ENCODE measurements at regions of chr4 and their contacts with region 1.

Region 1: GRCh38 chr4:176013476-176014247 is 52.0 kb upstream of the WDR17 start:
- DNase-seq: peak; percentile 79
- H3K4me3 ChIP-seq: peak overlapping the region; percentile 26
- H3K27ac ChIP-seq: peak overlapping the region; percentile 85
- H3K4me1 ChIP-seq: peaks cover 52% of the 10 kb centered on the region
- CTCF ChIP-seq: no peak

Region 2: DNA sequence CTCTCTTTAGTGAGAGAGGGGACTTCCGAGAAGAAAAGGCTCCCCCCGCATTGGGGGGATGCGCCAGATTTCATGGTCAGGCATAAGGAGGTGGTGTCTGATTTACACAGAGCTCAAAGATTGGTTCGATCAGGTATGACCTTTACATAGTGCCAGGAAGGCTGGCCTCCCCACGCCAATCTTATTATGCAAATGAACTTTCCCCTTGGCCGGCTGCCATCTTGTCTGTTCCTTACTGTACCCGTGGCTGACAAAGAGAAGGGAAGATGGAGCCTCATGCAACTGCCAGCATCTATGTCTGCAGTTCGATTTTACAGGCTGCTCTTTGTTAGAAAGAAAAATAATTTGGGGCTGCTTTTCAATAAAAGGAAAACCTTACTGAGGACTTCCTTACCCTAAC is 398.8 kb before region 1 on chr4:
- CTCF ChIA-PET with region 1: no interaction called
- POLR2A ChIA-PET with region 1: no interaction called
- intact Hi-C with region 1: no loop called
- DNase-seq: no peak
- H3K4me3 ChIP-seq: no peak overlapping the region
- H3K27ac ChIP-seq: no peak overlapping the region
- H3K4me1 ChIP-seq: no peaks in the 10 kb centered on the region
- CTCF ChIP-seq: no peak

Region 3: GRCh38 chr4:175997291-175997690 is 16.4 kb before region 1 on chr4:
- CTCF ChIA-PET with region 1: no interaction called
- POLR2A ChIA-PET with region 1: interaction called, 10 read pairs
- intact Hi-C with region 1: no loop called
- DNase-seq: no peak
- H3K4me3 ChIP-seq: no peak overlapping the region
- H3K27ac ChIP-seq: no peak overlapping the region
- H3K4me1 ChIP-seq: peaks cover 11% of the 10 kb centered on the region
- CTCF ChIP-seq: no peak

Region 4: DNA sequence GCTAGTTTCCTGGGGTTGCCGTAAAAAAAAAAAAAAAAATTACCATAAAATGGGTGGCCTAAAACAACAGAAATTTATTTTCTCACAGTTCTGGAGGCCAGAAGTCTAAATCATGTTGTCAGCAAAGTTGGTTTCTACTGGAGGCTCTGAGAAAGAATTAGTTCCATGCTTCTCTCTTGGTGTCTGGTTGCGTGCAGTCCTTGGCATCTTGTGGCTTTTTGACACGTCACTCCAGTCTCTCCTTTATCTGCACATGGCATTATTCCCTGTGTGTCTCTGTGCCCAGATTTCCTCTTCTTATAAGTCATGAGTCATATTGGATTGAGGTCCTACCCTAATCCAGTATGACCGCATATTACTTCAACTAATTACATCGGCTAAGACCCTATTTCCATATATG is 143.0 kb after region 1 on chr4:
- CTCF ChIA-PET with region 1: no interaction called
- POLR2A ChIA-PET with region 1: no interaction called
- intact Hi-C with region 1: no loop called
- DNase-seq: no peak
- H3K4me3 ChIP-seq: no peak overlapping the region
- H3K27ac ChIP-seq: no peak overlapping the region
- H3K4me1 ChIP-seq: no peaks in the 10 kb centered on the region
- CTCF ChIP-seq: no peak

Region 5: DNA sequence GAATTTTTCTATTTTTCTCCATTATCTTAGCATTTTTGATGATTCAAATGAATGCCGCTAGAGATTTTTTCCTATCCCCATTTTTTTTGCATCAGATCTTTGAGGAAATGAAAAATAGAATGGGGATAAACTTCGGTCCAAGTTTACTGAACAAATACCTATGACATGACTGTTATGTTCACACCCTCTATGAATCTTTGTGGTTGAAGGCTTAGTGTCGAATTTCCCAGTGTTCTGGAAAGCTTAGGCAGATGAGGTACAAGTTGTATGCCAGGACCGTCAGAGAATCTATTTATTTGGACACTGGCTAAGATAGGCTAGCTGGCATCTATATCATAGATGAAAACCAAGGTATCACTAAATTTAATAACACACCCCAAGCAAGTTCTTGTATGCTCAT is 429.5 kb after region 1 on chr4:
- CTCF ChIA-PET with region 1: no interaction called
- POLR2A ChIA-PET with region 1: no interaction called
- intact Hi-C with region 1: no loop called
- DNase-seq: no peak
- H3K4me3 ChIP-seq: no peak overlapping the region
- H3K27ac ChIP-seq: no peak overlapping the region
- H3K4me1 ChIP-seq: no peaks in the 10 kb centered on the region
- CTCF ChIP-seq: no peak

Region 6: GRCh38 chr4:176525576-176525975 is 511.9 kb after region 1 on chr4:
- CTCF ChIA-PET with region 1: no interaction called
- POLR2A ChIA-PET with region 1: no interaction called
- intact Hi-C with region 1: no loop called
- DNase-seq: no peak
- H3K4me3 ChIP-seq: no peak overlapping the region
- H3K27ac ChIP-seq: no peak overlapping the region
- H3K4me1 ChIP-seq: no peaks in the 10 kb centered on the region
- CTCF ChIP-seq: no peak